Naive thymus-derived CD4-positive, alpha-beta T cell (primary cell): ENCODE measurements at regions of chr18 and their contacts with region 1.

Region 1: DNA sequence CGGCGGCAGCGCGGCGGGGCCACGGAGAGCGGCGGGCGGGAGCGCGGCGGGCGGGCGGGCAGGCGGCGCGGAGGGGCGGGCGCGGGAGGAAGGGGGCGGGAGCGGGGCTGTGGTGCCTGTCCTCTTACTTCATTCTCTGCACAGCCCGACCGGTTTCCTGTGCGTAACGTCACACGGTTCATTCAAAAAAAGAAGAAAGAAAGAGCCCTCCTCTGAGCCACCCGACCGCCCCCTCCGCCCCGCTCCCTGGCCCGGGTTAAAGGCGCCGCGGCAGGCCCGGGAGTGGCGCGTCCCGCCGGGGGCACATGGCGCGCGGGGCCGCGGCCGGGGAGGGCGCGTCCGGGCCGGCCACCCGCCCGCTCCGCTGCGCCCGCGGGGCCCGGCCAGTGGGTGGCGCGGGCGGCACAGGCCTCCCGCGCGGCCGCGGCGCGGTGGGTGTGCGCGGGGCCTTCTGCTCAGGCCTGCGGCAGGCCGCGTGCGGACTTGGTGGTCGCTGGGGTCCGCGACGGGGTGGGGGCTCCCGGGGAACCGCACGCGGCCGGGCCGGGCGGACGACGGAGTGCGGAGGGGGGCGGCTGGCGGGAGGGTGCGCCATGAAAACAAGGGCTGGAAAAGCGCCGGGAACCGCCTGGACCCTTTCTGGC is 599 bp upstream of the BCL2 start:
- DNase-seq: peak; percentile 71 to 93 (median 90)
- ATAC-seq: peak; percentile 89
- H3K4me3 ChIP-seq: peak overlapping the region; percentile 61
- H3K4me3 Mint-ChIP-seq: peak overlapping the region; percentile 86 to 99 (median 94)
- H3K27ac ChIP-seq: peak overlapping the region; percentile 94
- H3K27ac Mint-ChIP-seq: peak overlapping the region; percentile 87 to 98 (median 94)
- H3K4me1 ChIP-seq: peaks cover 13 to 15% of the 10 kb centered on the region in 2 donors
- H3K4me1 Mint-ChIP-seq: peaks cover 21 to 45% (median 38%) of the 10 kb centered on the region in 7 donors
- H3K27me3 ChIP-seq: no peaks in the 10 kb centered on the region
- H3K27me3 Mint-ChIP-seq: no peaks in the 10 kb centered on the region

Region 2: DNA sequence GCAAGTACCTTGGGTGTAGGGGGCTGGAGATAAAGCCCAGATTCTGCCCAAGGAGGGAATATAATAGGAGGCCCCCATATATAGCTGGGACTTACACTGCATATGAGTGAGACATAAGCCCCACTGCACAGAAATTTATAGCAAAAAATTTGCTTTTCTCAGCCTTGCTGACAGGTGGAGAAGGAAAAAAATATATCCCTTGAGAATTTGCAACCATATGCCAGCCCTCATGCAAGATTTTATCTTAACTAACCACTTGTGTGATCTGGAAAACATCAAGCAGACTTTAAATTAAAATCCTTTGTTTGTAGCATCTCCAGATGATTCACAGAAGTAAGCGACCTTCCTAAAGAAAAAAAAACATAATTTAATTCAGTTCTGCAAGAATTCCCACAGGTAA is 288.8 kb before region 1 on chr18:
- CTCF ChIA-PET with region 1: no interaction called
- POLR2A ChIA-PET with region 1: interaction called, 10 read pairs
- intact Hi-C with region 1: no loop called
- DNase-seq: no peak
- ATAC-seq: no peak
- H3K4me3 ChIP-seq: no peak overlapping the region
- H3K4me3 Mint-ChIP-seq: no peak overlapping the region
- H3K27ac ChIP-seq: no peak overlapping the region
- H3K27ac Mint-ChIP-seq: no peak overlapping the region
- H3K4me1 ChIP-seq: no peaks in the 10 kb centered on the region
- H3K4me1 Mint-ChIP-seq: peaks cover 0 to 2% (median 0%) of the 10 kb centered on the region in 7 donors
- H3K27me3 ChIP-seq: no peaks in the 10 kb centered on the region
- H3K27me3 Mint-ChIP-seq: peaks cover 0 to 12% (median 3%) of the 10 kb centered on the region in 5 donors

Region 3: GRCh38 chr18:63138436-63139340 is 181.5 kb before region 1 on chr18:
- CTCF ChIA-PET with region 1: interaction called, 88 read pairs
- POLR2A ChIA-PET with region 1: interaction called, 7 read pairs
- intact Hi-C with region 1: no loop called
- DNase-seq: no peak
- ATAC-seq: peak; percentile 23
- H3K4me3 ChIP-seq: peak overlapping the region; percentile 38
- H3K4me3 Mint-ChIP-seq: peak overlapping the region; percentile 78 to 96 (median 85)
- H3K27ac ChIP-seq: peak overlapping the region; percentile 63
- H3K27ac Mint-ChIP-seq: peak overlapping the region; percentile 28 to 94 (median 87)
- H3K4me1 ChIP-seq: peaks cover 25% of the 10 kb centered on the region in 2 donors
- H3K4me1 Mint-ChIP-seq: peaks cover 59 to 91% (median 79%) of the 10 kb centered on the region in 7 donors
- H3K27me3 ChIP-seq: no peaks in the 10 kb centered on the region
- H3K27me3 Mint-ChIP-seq: no peaks in the 10 kb centered on the region

Region 4: DNA sequence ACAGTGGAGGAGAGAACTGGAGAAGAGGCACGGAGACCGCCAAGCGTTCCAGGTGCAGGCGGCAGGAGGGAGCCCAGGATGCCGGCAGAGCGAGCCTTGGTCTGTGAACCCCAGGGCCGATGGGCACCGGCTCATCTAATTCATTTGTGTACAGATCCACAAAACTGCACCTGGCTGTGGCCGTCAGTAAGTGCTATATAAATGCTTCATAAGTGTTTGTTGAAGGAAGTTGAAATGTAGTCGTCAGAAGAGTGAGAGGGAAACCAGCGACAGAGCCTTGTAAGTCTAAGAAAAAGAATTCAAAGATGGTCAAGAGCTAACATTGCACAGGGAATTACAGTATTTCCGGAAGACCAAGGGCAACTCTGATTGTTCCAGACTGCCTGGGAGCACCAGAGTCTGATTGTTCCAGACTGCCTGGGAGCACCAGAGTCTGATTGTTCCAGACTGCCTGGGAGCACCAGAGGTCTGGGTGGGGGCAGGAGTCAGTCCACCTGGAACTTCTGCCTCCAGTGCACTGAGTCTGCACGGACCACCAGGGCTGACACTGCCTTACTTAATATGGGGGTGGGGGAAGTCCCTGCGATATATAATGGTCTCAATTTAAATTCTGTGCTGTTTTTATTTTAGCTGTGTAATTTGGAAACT is 112.9 kb before region 1 on chr18:
- CTCF ChIA-PET with region 1: interaction called, 10 read pairs
- POLR2A ChIA-PET with region 1: interaction called, 33 read pairs
- intact Hi-C with region 1: no loop called
- DNase-seq: no peak
- ATAC-seq: peak; percentile 46
- H3K4me3 ChIP-seq: peak overlapping the region; percentile 40
- H3K4me3 Mint-ChIP-seq: peak overlapping the region; percentile 72 to 94 (median 81)
- H3K27ac ChIP-seq: peak overlapping the region; percentile 63
- H3K27ac Mint-ChIP-seq: peak overlapping the region; percentile 77 to 96 (median 92)
- H3K4me1 ChIP-seq: peaks cover 58 to 97% of the 10 kb centered on the region in 2 donors
- H3K4me1 Mint-ChIP-seq: peaks cover 77 to 100% (median 95%) of the 10 kb centered on the region in 7 donors
- H3K27me3 ChIP-seq: no peaks in the 10 kb centered on the region
- H3K27me3 Mint-ChIP-seq: no peaks in the 10 kb centered on the region

Region 5: GRCh38 chr18:63267975-63268721 is 52.0 kb before region 1 on chr18:
- CTCF ChIA-PET with region 1: interaction called, 6 read pairs
- POLR2A ChIA-PET with region 1: interaction called, 6 read pairs
- intact Hi-C with region 1: loop called (anchors 2 kb)
- DNase-seq: peak in 1 of 9 donors; percentile 20
- ATAC-seq: peak; percentile 59
- H3K4me3 ChIP-seq: peak overlapping the region; percentile 20
- H3K4me3 Mint-ChIP-seq: peak overlapping the region; percentile 35 to 75 (median 65)
- H3K27ac ChIP-seq: peak overlapping the region; percentile 27
- H3K27ac Mint-ChIP-seq: peak overlapping the region; percentile 1 to 87 (median 48)
- H3K4me1 ChIP-seq: peaks cover 16 to 36% of the 10 kb centered on the region in 2 donors
- H3K4me1 Mint-ChIP-seq: peaks cover 57 to 94% (median 80%) of the 10 kb centered on the region in 7 donors
- H3K27me3 ChIP-seq: no peaks in the 10 kb centered on the region
- H3K27me3 Mint-ChIP-seq: no peaks in the 10 kb centered on the region

Region 6: GRCh38 chr18:63367053-63367953 is 47.1 kb after region 1 on chr18 and contains the start of gene KDSR:
- CTCF ChIA-PET with region 1: no interaction called
- POLR2A ChIA-PET with region 1: interaction called, 4 read pairs
- intact Hi-C with region 1: loop called (anchors 1 to 2 kb)
- DNase-seq: peak; percentile 71 to 90 (median 79)
- ATAC-seq: peak; percentile 92
- H3K4me3 ChIP-seq: peak within 1 kb of the TSS; percentile 92
- H3K4me3 Mint-ChIP-seq: peak within 1 kb of the TSS; percentile 85 to 99 (median 94)
- H3K27ac ChIP-seq: peak within 1 kb of the TSS; percentile 77
- H3K27ac Mint-ChIP-seq: peak within 1 kb of the TSS; percentile 84 to 92 (median 89)
- H3K4me1 ChIP-seq: peaks cover 6 to 29% of the 10 kb centered on the region in 2 donors
- H3K4me1 Mint-ChIP-seq: peaks cover 32 to 56% (median 41%) of the 10 kb centered on the region in 7 donors
- H3K27me3 ChIP-seq: no peaks in the 10 kb centered on the region
- H3K27me3 Mint-ChIP-seq: no peaks in the 10 kb centered on the region
- total RNA-seq, gene KDSR: 24.4 to 57.9 (median 46.9) TPM

Region 7: DNA sequence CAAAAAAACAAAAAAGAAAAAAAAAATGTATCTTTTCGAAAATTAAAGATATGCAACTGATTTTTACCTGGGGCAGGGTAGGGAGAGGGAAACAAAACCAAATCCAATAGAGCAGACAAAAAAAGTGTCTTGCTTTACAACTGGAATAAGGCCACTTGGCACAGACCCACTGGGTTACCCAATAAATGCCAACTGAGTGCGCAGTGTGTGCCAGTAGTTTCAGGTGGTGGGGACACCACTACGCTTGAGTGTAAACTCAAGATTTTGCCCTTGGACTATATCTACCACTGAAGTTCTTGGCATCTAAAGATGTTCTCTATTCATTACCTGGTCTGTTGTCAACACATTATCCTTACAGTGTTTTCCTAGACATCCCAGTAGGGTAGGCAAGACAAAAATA is 85.8 kb after region 1 on chr18:
- CTCF ChIA-PET with region 1: no interaction called
- POLR2A ChIA-PET with region 1: no interaction called
- intact Hi-C with region 1: no loop called
- DNase-seq: no peak
- ATAC-seq: no peak
- H3K4me3 ChIP-seq: no peak overlapping the region
- H3K4me3 Mint-ChIP-seq: no peak overlapping the region
- H3K27ac ChIP-seq: no peak overlapping the region
- H3K27ac Mint-ChIP-seq: no peak overlapping the region
- H3K4me1 ChIP-seq: peaks cover 5 to 9% of the 10 kb centered on the region in 2 donors
- H3K4me1 Mint-ChIP-seq: peaks cover 5 to 41% (median 34%) of the 10 kb centered on the region in 7 donors
- H3K27me3 ChIP-seq: no peaks in the 10 kb centered on the region
- H3K27me3 Mint-ChIP-seq: no peaks in the 10 kb centered on the region